Activated CD4-positive, alpha-beta memory T cell treated with anti-CD3 and anti-CD28 coated beads, Interleukin-2, amount 10 ng/mL, durations not matched to agents 7 days and 5 days (primary cell): ENCODE measurements at regions of chr10 and their contacts with region 1.

Region 1: GRCh38 chr10:104121520-104122224 is at the start of gene SFR1:
- DNase-seq: peak; percentile 99
- H3K4me3 Mint-ChIP-seq: peak within 1 kb of the TSS; percentile 80
- H3K27ac Mint-ChIP-seq: peak within 1 kb of the TSS; percentile 98
- H3K4me1 Mint-ChIP-seq: peaks cover 36% of the 10 kb centered on the region
- H3K27me3 Mint-ChIP-seq: peaks cover 7% of the 10 kb centered on the region
- total RNA-seq, gene SFR1: 17.8 to 18.7 TPM

Region 2: DNA sequence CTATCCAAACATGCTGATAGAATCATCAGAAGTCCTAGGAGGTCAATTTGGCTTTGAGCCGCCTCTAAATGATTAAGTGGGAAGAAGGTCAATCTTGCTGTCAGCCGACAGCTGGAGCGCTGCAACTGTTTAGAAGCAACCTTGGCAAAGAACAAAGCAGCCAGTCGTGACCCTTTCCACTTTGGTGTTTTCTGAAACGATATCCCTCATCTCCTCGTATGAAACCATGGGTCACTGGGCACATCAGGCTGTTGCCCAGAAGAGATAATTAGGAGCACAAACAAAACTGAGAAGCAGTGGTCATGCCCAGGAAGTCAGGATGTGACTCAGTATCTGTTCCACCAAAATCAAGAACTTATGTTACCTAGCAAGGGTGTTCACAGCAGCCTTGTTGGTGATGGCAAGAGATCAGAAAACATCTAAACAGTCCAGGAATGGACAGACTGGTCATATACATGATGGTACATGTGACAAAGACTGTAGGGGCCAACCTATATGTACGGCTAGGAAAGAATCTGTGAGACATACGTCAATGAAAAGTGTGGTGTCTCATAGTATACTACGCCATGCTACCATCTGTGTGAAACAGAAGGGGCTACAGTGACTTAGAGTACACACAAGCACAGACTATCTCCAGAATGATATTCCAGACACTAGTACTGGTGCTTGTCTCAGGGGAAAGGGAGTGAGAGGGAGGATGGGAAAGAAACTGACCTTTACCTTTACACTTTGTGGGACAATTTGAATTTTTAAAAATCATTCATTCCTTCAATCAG is 226.1 kb before region 1 on chr10:
- CTCF ChIA-PET with region 1: interaction called, 27 read pairs
- POLR2A ChIA-PET with region 1: interaction called, 32 read pairs
- DNase-seq: no peak
- H3K4me3 Mint-ChIP-seq: peak overlapping the region; percentile 7
- H3K27ac Mint-ChIP-seq: peak overlapping the region; percentile 91
- H3K4me1 Mint-ChIP-seq: peaks cover 71% of the 10 kb centered on the region
- H3K27me3 Mint-ChIP-seq: no peaks in the 10 kb centered on the region

Region 3: DNA sequence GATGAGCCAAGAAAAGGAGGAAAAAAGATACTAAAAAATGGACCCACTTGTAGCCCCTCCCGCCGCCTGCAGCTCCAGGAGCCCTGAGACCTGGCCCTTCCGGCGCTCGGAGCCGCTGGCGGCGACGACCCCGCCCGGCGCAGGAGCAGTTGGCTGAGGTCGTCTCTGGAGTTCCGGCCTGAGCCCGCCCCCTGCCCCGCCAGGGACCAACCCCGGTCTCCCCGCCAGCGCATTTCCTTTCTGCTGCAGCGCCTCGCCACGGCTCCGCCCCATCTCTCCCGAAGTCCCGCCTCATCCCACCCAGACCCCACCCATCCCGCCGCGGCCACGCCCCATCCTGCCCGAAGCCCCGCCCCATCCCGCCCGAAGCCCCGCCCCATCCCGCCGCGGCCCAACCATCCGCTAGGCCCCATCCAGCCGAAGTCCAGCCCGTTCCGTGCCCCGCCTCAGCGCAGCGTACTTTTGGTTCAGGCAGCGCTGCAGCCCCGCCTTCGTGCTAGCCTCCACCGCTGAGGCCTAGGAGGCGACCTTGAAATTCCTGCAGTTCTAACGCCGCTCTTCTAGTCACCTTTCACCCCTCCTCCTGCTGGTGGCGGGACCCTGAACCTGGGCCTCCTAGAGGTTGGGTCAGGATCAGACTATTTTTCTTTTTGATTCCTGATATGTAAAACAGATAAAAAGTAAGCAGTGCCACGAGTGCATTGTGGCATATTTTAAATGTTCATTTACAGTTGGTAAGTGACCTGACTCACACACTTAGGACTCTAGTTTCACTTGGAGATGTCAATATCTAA is 203.4 kb before region 1 on chr10 and contains the start of gene STN1:
- CTCF ChIA-PET with region 1: interaction called, 4 read pairs
- POLR2A ChIA-PET with region 1: interaction called, 31 read pairs
- DNase-seq: peak; percentile 97
- H3K4me3 Mint-ChIP-seq: peak within 1 kb of the TSS; percentile 91
- H3K27ac Mint-ChIP-seq: peak within 1 kb of the TSS; percentile 93
- H3K4me1 Mint-ChIP-seq: peaks cover 37% of the 10 kb centered on the region
- H3K27me3 Mint-ChIP-seq: no peaks in the 10 kb centered on the region
- total RNA-seq, gene STN1: 55.1 to 56.8 TPM

Region 4: DNA sequence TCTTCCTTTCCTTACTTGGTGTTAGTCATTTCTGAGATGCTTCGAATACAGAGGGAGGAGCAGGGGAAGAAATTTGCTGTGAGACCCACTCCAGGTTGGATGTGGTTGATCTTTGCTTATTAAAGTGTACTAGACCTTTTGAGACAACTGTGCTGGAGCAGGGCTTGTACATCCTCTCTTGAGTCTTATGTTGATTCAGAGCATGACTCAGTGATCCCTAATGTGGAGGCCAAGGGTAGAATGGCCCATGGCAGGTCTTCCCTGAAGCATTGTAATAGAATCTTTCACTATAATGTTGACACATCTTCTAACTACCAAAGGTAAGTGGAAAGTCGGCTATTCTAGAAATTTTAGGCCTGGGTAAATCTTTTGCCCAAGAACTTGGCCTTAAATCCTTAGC is 16.7 kb before region 1 on chr10:
- CTCF ChIA-PET with region 1: interaction called, 14 read pairs
- POLR2A ChIA-PET with region 1: interaction called, 20 read pairs
- DNase-seq: no peak
- H3K4me3 Mint-ChIP-seq: no peak overlapping the region
- H3K27ac Mint-ChIP-seq: no peak overlapping the region
- H3K4me1 Mint-ChIP-seq: peaks cover 6% of the 10 kb centered on the region
- H3K27me3 Mint-ChIP-seq: peaks cover 11% of the 10 kb centered on the region

Region 5: DNA sequence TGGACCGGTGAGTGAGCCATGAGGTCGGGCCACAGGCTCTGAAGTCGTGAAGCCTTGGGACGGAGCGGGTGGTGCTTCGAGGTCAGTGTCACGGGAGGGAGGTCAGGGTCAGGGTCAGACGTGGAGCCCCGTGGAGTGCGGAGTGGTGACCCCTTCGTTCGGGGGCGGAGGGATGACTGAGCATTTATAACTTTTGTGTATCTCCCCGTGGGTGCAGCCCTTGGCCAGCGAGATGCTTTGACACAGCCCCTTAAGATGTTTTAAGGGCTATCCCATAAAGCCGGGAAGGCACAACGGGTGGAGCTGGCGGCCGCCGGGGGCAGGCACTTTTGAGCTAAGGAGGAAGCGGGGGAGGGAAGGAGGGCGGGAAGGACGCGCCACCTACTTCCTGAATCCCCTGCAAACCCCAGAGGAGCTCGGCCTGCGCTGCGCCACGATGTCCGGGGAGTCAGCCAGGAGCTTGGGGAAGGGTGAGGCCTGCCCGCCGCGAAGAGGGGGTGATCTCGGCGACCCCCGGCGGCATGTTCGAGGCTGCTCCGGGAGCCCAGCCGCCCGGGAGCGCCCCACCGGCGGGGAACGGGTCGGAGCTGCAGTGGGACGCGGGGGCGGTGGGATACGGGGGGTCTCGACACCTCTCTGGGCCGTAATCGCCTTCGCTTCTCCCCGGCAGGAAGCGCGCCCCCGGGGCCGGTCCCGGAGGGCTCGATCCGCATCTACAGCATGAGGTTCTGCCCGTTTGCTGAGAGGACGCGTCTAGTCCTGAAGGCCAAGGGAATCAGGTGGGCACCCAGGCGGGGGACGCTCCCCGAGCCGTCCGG is 133.0 kb after region 1 on chr10 and contains the start of gene GSTO1:
- CTCF ChIA-PET with region 1: interaction called, 9 read pairs
- POLR2A ChIA-PET with region 1: interaction called, 24 read pairs
- DNase-seq: peak; percentile 62
- H3K4me3 Mint-ChIP-seq: peak within 1 kb of the TSS; percentile 97
- H3K27ac Mint-ChIP-seq: peak within 1 kb of the TSS; percentile 92
- H3K4me1 Mint-ChIP-seq: peaks cover 50% of the 10 kb centered on the region
- H3K27me3 Mint-ChIP-seq: peaks cover 14% of the 10 kb centered on the region
- total RNA-seq, gene GSTO1: 139 to 142 TPM